ENCODE measurements at regions of chr1 and their contacts with region 1.

Region 1: GRCh38 chr1:31182352-31182751 is 57.3 kb downstream of the NKAIN1 start:
- DNase-seq: peak; percentile 89
- H3K4me3 Mint-ChIP-seq: peak overlapping the region; percentile 37
- H3K27ac Mint-ChIP-seq: no peak overlapping the region
- H3K4me1 Mint-ChIP-seq: peaks cover 5% of the 10 kb centered on the region
- H3K27me3 Mint-ChIP-seq: peaks cover 26% of the 10 kb centered on the region

Region 2: DNA sequence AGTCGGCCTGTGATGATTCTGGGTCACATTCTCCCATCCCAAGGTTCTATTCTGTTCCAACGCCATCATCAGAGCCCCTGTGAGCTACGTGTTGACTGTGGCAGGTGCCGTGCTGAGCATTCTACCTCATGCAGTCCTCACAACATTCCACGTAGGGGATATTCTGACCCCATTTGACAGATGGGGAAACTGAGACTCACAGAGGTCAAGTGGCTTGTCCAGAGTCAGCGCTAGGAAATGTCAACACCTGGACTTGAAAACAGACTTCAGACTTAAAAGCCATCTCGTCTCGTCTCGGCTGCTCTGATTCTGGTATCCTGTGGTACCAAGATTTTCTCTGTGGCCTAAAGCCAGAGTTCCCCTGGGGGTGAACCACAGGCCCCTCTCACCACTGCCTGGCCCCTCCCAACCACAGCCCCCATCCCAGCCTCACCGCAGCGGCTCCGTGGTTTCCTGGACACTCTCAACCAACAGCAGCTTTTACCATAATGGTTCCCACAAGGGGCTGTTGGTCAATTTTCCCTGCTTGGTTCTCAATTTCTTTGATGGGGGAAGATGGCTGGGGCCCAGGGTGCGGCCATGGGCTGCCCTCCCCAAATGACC is 313.4 kb before region 1 on chr1:
- intact Hi-C with region 1: no loop called
- DNase-seq: peak; percentile 63
- H3K4me3 Mint-ChIP-seq: no peak overlapping the region
- H3K27ac Mint-ChIP-seq: no peak overlapping the region
- H3K4me1 Mint-ChIP-seq: peaks cover 8% of the 10 kb centered on the region
- H3K27me3 Mint-ChIP-seq: peaks cover 19% of the 10 kb centered on the region

Region 3: DNA sequence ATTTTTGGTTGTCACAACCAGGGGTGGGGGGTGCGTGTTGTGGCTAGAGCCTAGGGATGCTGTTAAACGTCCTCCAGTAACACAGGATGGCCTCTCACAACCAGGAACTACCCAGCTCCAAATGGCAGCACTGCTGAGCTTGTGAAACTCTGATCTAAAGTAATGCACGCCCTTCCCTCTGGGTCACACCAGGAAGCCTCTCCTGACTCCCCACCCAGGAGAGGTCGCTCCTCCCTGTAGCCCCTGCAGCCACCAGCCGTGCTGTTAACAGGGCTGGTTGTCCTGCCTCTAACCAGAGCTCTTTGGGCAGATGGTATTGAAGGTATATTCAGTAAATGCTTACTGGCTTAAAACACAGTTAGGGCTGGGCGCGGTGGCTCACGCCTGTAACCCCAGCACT is 15.9 kb before region 1 on chr1:
- intact Hi-C with region 1: loop called (anchors 1 kb)
- DNase-seq: no peak
- H3K4me3 Mint-ChIP-seq: no peak overlapping the region
- H3K27ac Mint-ChIP-seq: no peak overlapping the region
- H3K4me1 Mint-ChIP-seq: peaks cover 14% of the 10 kb centered on the region
- H3K27me3 Mint-ChIP-seq: peaks cover 4% of the 10 kb centered on the region

Region 4: DNA sequence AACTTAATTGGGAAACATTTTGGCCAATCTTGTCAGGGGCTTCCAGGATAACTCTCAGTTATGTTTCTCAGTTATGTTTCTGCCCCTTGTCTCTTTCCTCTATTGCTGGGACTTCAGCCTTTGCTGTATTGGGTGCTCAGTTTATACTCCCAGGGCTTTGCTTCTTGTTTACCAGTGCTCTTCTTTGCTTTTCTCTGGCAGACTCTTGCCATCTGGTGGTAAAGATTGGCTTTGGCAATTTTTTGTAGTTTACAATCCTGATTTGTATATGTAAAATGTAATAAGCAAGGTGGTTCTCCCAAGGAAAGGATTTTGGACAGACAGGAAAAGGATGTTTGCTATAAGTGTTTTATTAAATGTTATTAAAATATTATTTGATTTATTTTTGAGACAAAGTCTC is 152.7 kb after region 1 on chr1:
- intact Hi-C with region 1: loop called (anchors 2 kb)
- DNase-seq: peak; percentile 64
- H3K4me3 Mint-ChIP-seq: no peak overlapping the region
- H3K27ac Mint-ChIP-seq: no peak overlapping the region
- H3K4me1 Mint-ChIP-seq: no peaks in the 10 kb centered on the region
- H3K27me3 Mint-ChIP-seq: no peaks in the 10 kb centered on the region

Region 5: DNA sequence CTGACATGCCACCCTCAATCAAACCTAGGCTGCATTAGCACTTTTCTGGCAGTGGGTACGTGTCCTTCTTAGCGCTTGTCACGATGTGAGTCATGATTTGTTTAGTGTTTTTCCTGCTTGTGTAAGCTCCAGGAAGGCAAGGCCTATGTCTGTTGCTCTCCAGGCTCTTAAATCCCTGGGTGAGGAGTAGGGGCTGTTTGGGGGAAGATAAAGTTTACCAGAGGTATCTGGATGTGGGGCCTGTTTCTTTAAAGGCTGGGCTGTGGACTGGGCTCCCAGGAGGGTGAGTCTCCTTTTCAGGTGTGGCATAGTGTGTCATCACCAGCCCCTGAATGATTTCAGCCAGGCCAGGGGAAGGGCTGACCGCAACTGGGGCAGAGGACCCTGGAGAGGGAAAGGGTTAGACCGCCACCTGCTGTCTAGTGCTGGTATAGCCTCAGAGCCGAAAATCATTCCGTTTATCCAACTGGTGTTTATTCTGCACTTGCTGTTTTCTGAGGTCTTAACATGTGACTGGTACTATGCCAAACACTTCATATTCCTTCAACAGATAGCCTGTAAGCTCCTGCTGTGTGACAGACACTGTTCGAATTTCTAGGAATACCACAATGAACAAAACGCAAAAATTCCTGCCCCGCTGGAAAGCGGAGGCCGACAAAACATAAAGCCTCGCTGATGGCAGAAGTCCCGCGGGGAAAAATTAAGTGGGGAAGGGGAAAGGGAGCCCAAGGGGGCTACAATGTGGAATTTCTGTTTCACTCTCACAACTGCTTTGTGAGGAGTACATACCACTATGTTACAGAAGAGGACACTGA is 240.4 kb after region 1 on chr1:
- intact Hi-C with region 1: loop called (anchors 1 kb)
- DNase-seq: peak; percentile 89
- H3K4me3 Mint-ChIP-seq: no peak overlapping the region
- H3K27ac Mint-ChIP-seq: no peak overlapping the region
- H3K4me1 Mint-ChIP-seq: no peaks in the 10 kb centered on the region
- H3K27me3 Mint-ChIP-seq: peaks cover 19% of the 10 kb centered on the region

Region 6: GRCh38 chr1:31548907-31549808 is 366.8 kb after region 1 on chr1:
- intact Hi-C with region 1: loop called (anchors 5 kb)
- DNase-seq: peak; percentile 97
- H3K4me3 Mint-ChIP-seq: peak overlapping the region; percentile 69
- H3K27ac Mint-ChIP-seq: no peak overlapping the region
- H3K4me1 Mint-ChIP-seq: peaks cover 7% of the 10 kb centered on the region
- H3K27me3 Mint-ChIP-seq: peaks cover 10% of the 10 kb centered on the region

Region 7: DNA sequence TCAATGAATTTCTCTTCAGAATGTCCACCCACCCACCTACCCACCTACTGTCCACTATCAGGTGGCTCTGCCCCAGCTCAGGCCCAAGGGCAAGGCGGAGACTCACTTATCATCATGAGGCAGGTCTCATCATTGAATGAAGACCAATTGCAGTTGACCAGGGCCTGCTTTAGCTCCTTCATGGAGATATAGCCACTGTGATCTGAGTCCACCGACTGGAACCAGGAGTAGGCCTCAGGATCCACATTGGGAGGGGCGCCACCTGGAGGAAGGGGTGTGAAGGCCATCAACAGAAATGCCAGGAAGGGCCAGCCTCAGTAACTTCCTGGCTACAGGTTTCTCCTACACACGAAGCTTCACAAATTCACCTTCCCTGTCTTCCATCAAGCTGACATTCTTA is 450.7 kb after region 1 on chr1:
- intact Hi-C with region 1: no loop called
- DNase-seq: peak; percentile 75
- H3K4me3 Mint-ChIP-seq: no peak overlapping the region
- H3K27ac Mint-ChIP-seq: no peak overlapping the region
- H3K4me1 Mint-ChIP-seq: peaks cover 7% of the 10 kb centered on the region
- H3K27me3 Mint-ChIP-seq: no peaks in the 10 kb centered on the region

Measured in activated CD4-positive, alpha-beta T cell treated with anti-CD3 and anti-CD28 coated beads, Interleukin-2, amount 10 ng/mL, durations not matched to agents 24 days and 14 days (primary cell).